B cell (primary cell): ENCODE measurements at regions of chr2 and their contacts with region 1.

Region 1: DNA sequence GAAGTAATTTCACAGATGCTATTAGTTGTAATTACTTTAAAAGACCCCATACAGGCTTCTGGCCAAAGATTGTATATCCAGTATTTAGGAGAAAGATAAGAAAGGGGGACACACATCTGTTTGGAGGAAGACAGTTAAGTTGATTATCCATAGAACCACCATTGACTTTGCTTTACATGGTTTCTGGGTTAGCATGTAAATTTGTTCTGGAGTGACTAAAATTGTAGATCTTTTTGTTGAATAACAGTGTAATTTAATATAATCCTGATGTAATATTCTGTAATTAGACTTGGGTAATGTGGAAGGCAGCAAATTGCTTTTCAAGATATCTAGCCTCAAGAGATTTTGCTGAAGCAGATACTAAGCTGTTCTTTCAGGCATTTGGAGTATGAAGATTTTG is 17.2 kb downstream of the COMMD1 start:
- DNase-seq: no peak
- ATAC-seq: no peak
- H3K4me3 ChIP-seq: no peak overlapping the region
- H3K4me3 Mint-ChIP-seq: no peak overlapping the region
- H3K27ac ChIP-seq: no peak overlapping the region
- H3K27ac Mint-ChIP-seq: no peak overlapping the region
- H3K4me1 ChIP-seq: peaks cover 6% of the 10 kb centered on the region in 2 donors
- H3K4me1 Mint-ChIP-seq: peaks cover 7% of the 10 kb centered on the region
- H3K27me3 ChIP-seq: no peaks in the 10 kb centered on the region
- H3K27me3 Mint-ChIP-seq: no peaks in the 10 kb centered on the region
- CTCF ChIP-seq: no peak

Region 2: GRCh38 chr2:62415019-62415431 is 492.3 kb after region 1 on chr2:
- CTCF ChIA-PET with region 1: interaction called, 69 read pairs
- POLR2A ChIA-PET with region 1: no interaction called
- intact Hi-C with region 1: loop called (anchors 1 kb)
- DNase-seq: no peak
- ATAC-seq: no peak
- H3K4me3 ChIP-seq: no peak overlapping the region
- H3K4me3 Mint-ChIP-seq: no peak overlapping the region
- H3K27ac ChIP-seq: peak overlapping the region in 1 of 2 donors; percentile 28
- H3K27ac Mint-ChIP-seq: no peak overlapping the region
- H3K4me1 ChIP-seq: peaks cover 8 to 17% of the 10 kb centered on the region in 2 donors
- H3K4me1 Mint-ChIP-seq: peaks cover 6% of the 10 kb centered on the region
- H3K27me3 ChIP-seq: no peaks in the 10 kb centered on the region
- H3K27me3 Mint-ChIP-seq: peaks cover 3% of the 10 kb centered on the region
- CTCF ChIP-seq: no peak

Region 3: GRCh38 chr2:62774555-62775366 is 852.0 kb after region 1 on chr2:
- CTCF ChIA-PET with region 1: interaction called, 11 read pairs
- POLR2A ChIA-PET with region 1: no interaction called
- intact Hi-C with region 1: loop called (anchors 2 kb)
- DNase-seq: peak; percentile 46
- ATAC-seq: no peak
- H3K4me3 ChIP-seq: no peak overlapping the region
- H3K4me3 Mint-ChIP-seq: no peak overlapping the region
- H3K27ac ChIP-seq: no peak overlapping the region
- H3K27ac Mint-ChIP-seq: no peak overlapping the region
- H3K4me1 ChIP-seq: no peaks in the 10 kb centered on the region
- H3K4me1 Mint-ChIP-seq: no peaks in the 10 kb centered on the region
- H3K27me3 ChIP-seq: no peaks in the 10 kb centered on the region
- H3K27me3 Mint-ChIP-seq: no peaks in the 10 kb centered on the region
- CTCF ChIP-seq: peak; percentile 88